ENCODE measurements at regions of chr6 and their contacts with region 1.

Region 1: GRCh38 chr6:148947621-148948444 is 201.0 kb downstream of the UST start:
- DNase-seq: peak; percentile 84 to 88
- H3K4me3 ChIP-seq: no peak overlapping the region
- H3K27ac ChIP-seq: no peak overlapping the region
- H3K4me1 ChIP-seq: peaks cover 0 to 3% of the 10 kb centered on the region in 2 donors
- H3K27me3 ChIP-seq: no peaks in the 10 kb centered on the region
- CTCF ChIP-seq: peak; percentile 78 to 89 (median 88)
- POLR2A ChIP-seq: no peak

Region 2: GRCh38 chr6:148578245-148578732 is 369.5 kb before region 1 on chr6:
- intact Hi-C with region 1: loop called (anchors 10 kb)
- DNase-seq: peak; percentile 67 to 75
- H3K4me3 ChIP-seq: no peak overlapping the region
- H3K27ac ChIP-seq: no peak overlapping the region
- H3K4me1 ChIP-seq: no peaks in the 10 kb centered on the region
- H3K27me3 ChIP-seq: no peaks in the 10 kb centered on the region
- CTCF ChIP-seq: peak; percentile 69 to 93 (median 86)
- POLR2A ChIP-seq: no peak

Region 3: DNA sequence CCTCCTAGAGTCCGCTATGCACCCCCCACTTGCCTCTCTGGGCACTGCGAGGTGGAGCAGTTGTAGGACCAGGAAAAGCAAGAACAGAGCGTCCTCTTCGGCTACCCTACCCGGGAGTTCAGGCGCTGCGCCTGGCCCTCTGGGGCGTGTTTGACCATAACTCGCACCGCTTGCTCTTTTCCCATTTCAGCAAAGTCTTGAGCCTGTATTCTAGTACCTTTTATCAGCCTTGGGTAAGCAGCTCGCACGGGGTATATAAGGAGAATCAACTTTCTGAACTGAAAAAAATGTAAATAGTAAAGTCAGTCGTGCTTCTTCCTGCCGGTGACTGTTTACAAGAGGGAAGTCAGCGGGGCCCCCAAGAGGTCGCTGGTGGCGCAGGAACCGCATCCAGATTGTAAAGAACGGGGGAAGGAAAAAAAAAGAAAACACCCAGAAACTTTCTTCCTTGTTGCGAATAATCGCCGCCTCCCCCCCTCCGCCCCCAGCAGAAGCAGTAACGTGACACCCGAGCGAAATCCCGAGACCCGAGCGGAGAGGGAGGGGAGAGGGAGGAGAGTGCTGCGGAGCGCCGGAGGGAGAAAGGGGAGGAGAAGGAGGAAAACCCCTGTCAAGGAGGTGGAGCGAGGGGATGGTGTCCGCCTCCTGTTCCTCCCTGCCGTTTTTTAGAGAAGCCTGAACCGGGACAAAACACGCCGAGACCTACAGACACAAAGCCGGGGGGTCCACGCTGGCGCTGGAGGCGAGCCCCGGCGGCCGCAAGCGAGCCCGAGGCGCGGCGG is 201.3 kb before region 1 on chr6 and contains the start of gene UST:
- intact Hi-C with region 1: loop called (anchors 5 kb)
- DNase-seq: peak; percentile 88 to 93
- H3K4me3 ChIP-seq: peak within 1 kb of the TSS; percentile 63 to 78
- H3K27ac ChIP-seq: peak within 1 kb of the TSS; percentile 89 to 94
- H3K4me1 ChIP-seq: no peaks in the 10 kb centered on the region
- H3K27me3 ChIP-seq: no peaks in the 10 kb centered on the region
- CTCF ChIP-seq: peak; percentile 1 to 60 (median 40)
- POLR2A ChIP-seq: peak; percentile 65 to 68
- total RNA-seq, gene UST: 6.1 to 23.2 (median 17.2) TPM

Region 4: GRCh38 chr6:148915810-148916209 is 32.0 kb before region 1 on chr6:
- intact Hi-C with region 1: no loop called
- DNase-seq: no peak
- H3K4me3 ChIP-seq: no peak overlapping the region
- H3K27ac ChIP-seq: no peak overlapping the region
- H3K4me1 ChIP-seq: no peaks in the 10 kb centered on the region
- H3K27me3 ChIP-seq: no peaks in the 10 kb centered on the region
- CTCF ChIP-seq: no peak
- POLR2A ChIP-seq: no peak

Region 5: DNA sequence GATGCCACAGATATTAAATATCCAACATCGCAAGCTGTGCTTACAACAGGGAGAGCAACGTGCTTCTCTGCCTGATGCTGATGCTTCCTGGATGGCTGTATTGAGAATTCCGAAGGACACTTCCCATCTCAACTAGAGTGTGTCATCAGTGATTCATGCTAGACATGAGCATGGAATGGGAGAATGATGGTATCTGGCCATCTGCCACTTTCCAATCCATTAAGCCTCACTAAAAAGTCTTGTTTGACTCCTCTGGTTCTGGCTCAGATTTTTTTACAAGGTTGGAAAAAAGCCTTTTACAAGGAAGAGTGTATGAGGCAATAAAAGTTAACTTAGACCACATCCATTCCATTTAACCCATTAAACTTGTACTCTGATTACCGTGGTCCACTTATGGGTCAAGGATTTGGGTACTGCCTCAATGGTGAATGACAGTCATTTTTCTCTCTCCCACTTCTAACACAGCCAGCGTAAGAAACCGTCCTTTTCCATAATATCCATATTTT is 64.3 kb after region 1 on chr6:
- intact Hi-C with region 1: no loop called
- DNase-seq: peak in 1 of 2 donors; percentile 52
- H3K4me3 ChIP-seq: no peak overlapping the region
- H3K27ac ChIP-seq: no peak overlapping the region
- H3K4me1 ChIP-seq: no peaks in the 10 kb centered on the region
- H3K27me3 ChIP-seq: no peaks in the 10 kb centered on the region
- CTCF ChIP-seq: no peak
- POLR2A ChIP-seq: no peak

Region 6: GRCh38 chr6:149060300-149060997 is 112.6 kb after region 1 on chr6:
- intact Hi-C with region 1: no loop called
- DNase-seq: no peak
- H3K4me3 ChIP-seq: no peak overlapping the region
- H3K27ac ChIP-seq: no peak overlapping the region
- H3K4me1 ChIP-seq: no peaks in the 10 kb centered on the region
- H3K27me3 ChIP-seq: no peaks in the 10 kb centered on the region
- CTCF ChIP-seq: no peak
- POLR2A ChIP-seq: no peak

Measured in uterus (tissue), 4 donors.